ENCODE measurements at regions of chr5 and their contacts with region 1.

Region 1: GRCh38 chr5:7347377-7347776 is 48.6 kb upstream of the ADCY2 start:
- DNase-seq: no peak
- H3K4me3 ChIP-seq: no peak overlapping the region
- H3K27ac ChIP-seq: no peak overlapping the region
- H3K4me1 ChIP-seq: no peaks in the 10 kb centered on the region
- H3K27me3 ChIP-seq: peaks cover 25% of the 10 kb centered on the region; the same call in 1 of the 2 replicates
- CTCF ChIP-seq: no peak

Region 2: GRCh38 chr5:7317751-7318150 is 29.6 kb before region 1 on chr5:
- CTCF ChIA-PET with region 1: no interaction called
- POLR2A ChIA-PET with region 1: no interaction called
- intact Hi-C with region 1: loop called (anchors 2 kb)
- DNase-seq: no peak
- H3K4me3 ChIP-seq: no peak overlapping the region
- H3K27ac ChIP-seq: no peak overlapping the region
- H3K4me1 ChIP-seq: no peaks in the 10 kb centered on the region
- H3K27me3 ChIP-seq: no peaks in the 10 kb centered on the region; the same call in 1 of the 2 replicates
- CTCF ChIP-seq: no peak

Region 3: GRCh38 chr5:7494481-7495130 is 147.2 kb after region 1 on chr5:
- CTCF ChIA-PET with region 1: no interaction called
- POLR2A ChIA-PET with region 1: no interaction called
- intact Hi-C with region 1: no loop called
- DNase-seq: no peak
- H3K4me3 ChIP-seq: no peak overlapping the region
- H3K27ac ChIP-seq: no peak overlapping the region
- H3K4me1 ChIP-seq: no peaks in the 10 kb centered on the region
- H3K27me3 ChIP-seq: no peaks in the 10 kb centered on the region
- CTCF ChIP-seq: no peak

Measured in PC-9 (cell line).